Motor neuron (in vitro differentiated cells): ENCODE measurements at regions of chr15 and their contacts with region 1.

Region 1: DNA sequence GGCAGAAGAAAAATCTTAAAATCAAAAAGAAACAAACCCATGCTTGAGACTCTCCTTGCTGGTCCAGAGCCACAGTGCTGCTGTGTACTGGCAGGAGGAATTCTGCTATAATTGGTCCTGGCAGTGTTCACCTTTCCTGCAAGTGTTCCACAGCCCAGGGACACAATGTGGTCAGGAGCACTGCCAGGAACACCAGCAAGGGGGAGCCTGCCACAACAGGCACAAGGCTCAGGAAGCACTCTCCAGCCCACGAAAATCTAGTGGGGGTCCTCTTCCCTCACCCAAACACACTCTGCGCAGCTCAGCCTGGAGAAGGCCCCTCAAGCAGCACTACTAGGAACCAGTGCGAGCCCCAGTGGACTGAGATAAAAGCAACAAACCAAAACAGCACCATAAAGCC is 92.9 kb downstream of the UBE3A start:
- ATAC-seq: peak in 4 of 8 experiments; percentile 31 to 54 (median 47)
- H3K4me3 ChIP-seq: no peak overlapping the region
- H3K27ac ChIP-seq: no peak overlapping the region
- H3K4me1 ChIP-seq: no peaks in the 10 kb centered on the region

Region 2: GRCh38 chr15:25438601-25439368 is 92.8 kb after region 1 on chr15 and contains the start of gene UBE3A:
- in situ Hi-C with region 1: loop called in 1 of 9 experiments (anchors 25 kb)
- ATAC-seq: peak; percentile 87 to 93 (median 89)
- H3K4me3 ChIP-seq: peak within 1 kb of the TSS; percentile 67 to 91 (median 70)
- H3K27ac ChIP-seq: peak within 1 kb of the TSS; percentile 96 to 99
- H3K4me1 ChIP-seq: peaks cover 3 to 20% of the 10 kb centered on the region in 2 donors
- total RNA-seq, gene UBE3A: 58.9 to 105 (median 86.3) TPM

Region 3: DNA sequence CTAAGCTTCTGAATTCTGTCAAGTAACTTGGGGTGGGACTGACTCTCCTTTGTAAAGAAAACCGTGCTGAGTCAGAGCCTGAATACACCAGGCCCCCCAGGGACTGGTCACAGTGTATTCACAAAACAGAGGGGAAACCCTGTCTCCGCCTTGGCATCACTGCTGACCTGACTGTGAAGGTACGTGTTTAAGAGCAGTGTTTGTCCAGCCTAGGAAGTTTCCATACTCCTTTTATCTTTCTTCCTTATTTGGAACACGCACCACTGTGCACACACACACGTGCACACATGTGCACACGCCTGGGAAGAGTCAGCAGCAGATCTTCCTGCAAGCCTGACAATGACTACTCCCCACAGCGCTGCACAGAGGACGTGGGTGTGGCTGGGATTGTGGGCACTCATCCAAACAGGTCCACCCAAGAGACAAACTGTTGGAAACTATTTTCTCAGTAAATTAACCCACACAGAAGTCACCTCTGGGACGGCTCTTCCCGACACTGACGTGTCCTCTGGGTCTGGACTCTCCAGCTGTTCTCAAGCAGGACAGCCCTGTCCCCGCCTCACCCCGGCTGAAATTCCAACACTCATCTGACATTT is 429.5 kb after region 1 on chr15:
- in situ Hi-C with region 1: no loop called
- ATAC-seq: peak; percentile 70 to 96 (median 89)
- H3K4me3 ChIP-seq: no peak overlapping the region
- H3K27ac ChIP-seq: no peak overlapping the region
- H3K4me1 ChIP-seq: peaks cover 6 to 15% of the 10 kb centered on the region in 2 donors